GM12878 (cell line): ENCODE measurements at regions of chr15 and their contacts with region 1.

Region 1: GRCh38 chr15:84035399-84035766 is 200.2 kb upstream of the GOLGA6L4 start:
- DNase-seq: no peak
- ATAC-seq: peak; percentile 93
- H3K4me3 ChIP-seq: no peak overlapping the region
- H3K27ac ChIP-seq: no peak overlapping the region
- H3K4me1 ChIP-seq: no peaks in the 10 kb centered on the region
- H3K27me3 ChIP-seq: no peaks in the 10 kb centered on the region
- CTCF ChIP-seq: peak; percentile 52 to 64 (median 64); a peak in 5 of 6 replicates
- EP300 ChIP-seq: no peak
- POLR2A ChIP-seq: no peak
- RAD21 ChIP-seq: peak; percentile 78

Region 2: GRCh38 chr15:83436458-83437158 is 598.8 kb before region 1 on chr15:
- CTCF ChIA-PET with region 1: interaction called, 4 read pairs
- POLR2A ChIA-PET with region 1: no interaction called
- RAD21 ChIA-PET with region 1: no interaction called
- SMC1A ChIA-PET with region 1: no interaction called
- in situ Hi-C with region 1: no loop called
- intact Hi-C with region 1: loop called (anchors 1 kb)
- DNase-seq: no peak
- ATAC-seq: peak; percentile 70
- H3K4me3 ChIP-seq: no peak overlapping the region
- H3K27ac ChIP-seq: no peak overlapping the region
- H3K4me1 ChIP-seq: no peaks in the 10 kb centered on the region
- H3K27me3 ChIP-seq: peaks cover 0 to 2% of the 10 kb centered on the region in 2 experiments; a peak in 1 of 4 replicates
- CTCF ChIP-seq: peak in 2 of 3 experiments; percentile 16 to 32; a peak in 1 of 6 replicates
- EP300 ChIP-seq: no peak
- POLR2A ChIP-seq: no peak
- RAD21 ChIP-seq: no peak

Region 3: GRCh38 chr15:83559310-83559966 is 475.9 kb before region 1 on chr15:
- CTCF ChIA-PET with region 1: interaction called, 5 read pairs
- POLR2A ChIA-PET with region 1: no interaction called
- RAD21 ChIA-PET with region 1: no interaction called
- SMC1A ChIA-PET with region 1: no interaction called
- in situ Hi-C with region 1: loop called (anchors 5 kb)
- intact Hi-C with region 1: no loop called
- DNase-seq: peak; percentile 20
- ATAC-seq: peak; percentile 88
- H3K4me3 ChIP-seq: no peak overlapping the region
- H3K27ac ChIP-seq: no peak overlapping the region
- H3K4me1 ChIP-seq: no peaks in the 10 kb centered on the region
- H3K27me3 ChIP-seq: no peaks in the 10 kb centered on the region
- CTCF ChIP-seq: peak; percentile 78 to 89 (median 85)
- EP300 ChIP-seq: no peak
- POLR2A ChIP-seq: no peak
- RAD21 ChIP-seq: peak; percentile 80

Region 4: DNA sequence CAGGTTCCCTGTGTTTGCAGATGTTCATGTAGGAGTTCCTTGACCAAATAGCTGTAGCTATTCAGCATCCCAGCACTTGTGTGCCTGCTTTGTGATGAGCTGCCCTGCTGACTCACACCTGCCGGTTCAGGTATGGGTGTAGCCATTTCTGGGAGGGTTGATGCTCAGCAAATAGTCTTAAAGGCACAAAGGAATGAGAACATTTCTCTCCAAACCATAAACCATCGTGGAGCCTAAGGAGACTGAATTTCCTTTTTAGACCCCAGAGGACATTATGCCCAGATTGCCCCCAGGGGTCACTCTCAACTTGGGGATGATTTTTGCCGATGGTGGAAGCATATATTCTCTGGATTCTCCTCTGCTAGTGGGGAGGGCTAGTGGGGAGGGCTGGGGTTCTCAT is 300.9 kb before region 1 on chr15:
- CTCF ChIA-PET with region 1: interaction called, 13 read pairs
- POLR2A ChIA-PET with region 1: no interaction called
- RAD21 ChIA-PET with region 1: no interaction called
- SMC1A ChIA-PET with region 1: interaction called, 4 read pairs
- in situ Hi-C with region 1: no loop called
- intact Hi-C with region 1: loop called (anchors 2 kb)
- DNase-seq: no peak
- ATAC-seq: peak; percentile 56; the same call in 2 of the 3 replicates
- H3K4me3 ChIP-seq: no peak overlapping the region
- H3K27ac ChIP-seq: no peak overlapping the region
- H3K4me1 ChIP-seq: no peaks in the 10 kb centered on the region
- H3K27me3 ChIP-seq: no peaks in the 10 kb centered on the region
- CTCF ChIP-seq: peak; percentile 34 to 53 (median 49); a peak in 5 of 6 replicates
- EP300 ChIP-seq: no peak
- POLR2A ChIP-seq: no peak
- RAD21 ChIP-seq: peak; percentile 94

Region 5: DNA sequence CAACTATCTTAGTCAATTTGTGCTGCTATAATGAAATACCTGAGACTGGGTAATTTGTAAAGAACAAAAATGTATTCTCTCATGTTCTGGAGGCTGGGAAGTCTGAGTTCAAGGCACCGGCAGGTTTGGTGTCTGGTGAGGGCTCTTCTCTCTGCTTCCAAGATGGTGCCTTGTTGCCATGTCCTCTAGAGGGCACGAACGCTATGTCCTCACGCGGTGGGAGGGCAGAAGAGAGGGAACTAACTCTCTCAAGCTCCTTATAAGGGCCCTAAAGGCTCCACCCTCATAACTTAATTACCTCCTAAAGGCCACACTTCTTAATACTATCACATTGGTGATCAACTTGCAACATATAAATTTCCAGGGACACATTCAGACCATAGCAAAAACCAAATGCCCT is 273.0 kb before region 1 on chr15:
- CTCF ChIA-PET with region 1: interaction called, 10 read pairs
- POLR2A ChIA-PET with region 1: no interaction called
- RAD21 ChIA-PET with region 1: no interaction called
- SMC1A ChIA-PET with region 1: interaction called, 3 read pairs
- in situ Hi-C with region 1: no loop called
- intact Hi-C with region 1: no loop called
- DNase-seq: no peak
- ATAC-seq: peak; percentile 34; the same call in 1 of the 3 replicates
- H3K4me3 ChIP-seq: no peak overlapping the region
- H3K27ac ChIP-seq: no peak overlapping the region
- H3K4me1 ChIP-seq: no peaks in the 10 kb centered on the region
- H3K27me3 ChIP-seq: no peaks in the 10 kb centered on the region; a peak in 1 of 4 replicates
- CTCF ChIP-seq: 0 out of 6 replicates have a peak, but pooled peaks of 1 of the 3 experiments have one; percentile 3
- EP300 ChIP-seq: no peak
- POLR2A ChIP-seq: no peak
- RAD21 ChIP-seq: no peak